ENCODE measurements at regions of chr4 and their contacts with region 1.

Region 1: DNA sequence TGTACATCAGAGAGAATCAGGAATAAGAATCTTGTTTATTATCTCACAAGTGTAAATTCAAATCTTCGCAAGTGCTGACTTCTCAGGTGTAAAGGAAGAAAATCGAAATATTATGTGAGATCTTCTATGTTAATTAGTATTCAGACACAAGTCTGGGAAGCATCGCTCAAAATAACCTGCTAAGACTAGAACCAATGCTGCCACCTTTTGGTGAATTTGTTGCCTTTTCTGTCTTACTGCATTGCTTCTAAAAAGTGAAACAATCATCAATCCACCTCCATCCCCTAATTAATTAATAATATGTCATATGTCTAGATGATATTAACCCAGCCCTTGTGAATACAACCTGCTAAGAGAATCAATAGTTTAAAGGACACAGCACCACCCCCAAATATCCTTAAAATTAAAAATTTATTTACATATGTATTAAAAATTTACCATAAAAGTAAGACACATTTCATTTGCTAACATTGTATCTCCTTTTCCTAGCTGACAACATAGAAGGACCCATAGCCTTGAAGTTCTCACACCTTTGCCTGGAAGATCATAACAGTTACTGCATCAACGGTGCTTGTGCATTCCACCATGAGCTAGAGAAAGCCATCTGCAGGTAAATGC is 3.5 kb downstream of the EPGN start:
- DNase-seq: peak; percentile 40
- H3K4me3 Mint-ChIP-seq: no peak overlapping the region
- H3K27ac Mint-ChIP-seq: no peak overlapping the region
- H3K4me1 Mint-ChIP-seq: no peaks in the 10 kb centered on the region
- H3K27me3 Mint-ChIP-seq: no peaks in the 10 kb centered on the region
- CTCF ChIP-seq: peak; percentile 35

Region 2: DNA sequence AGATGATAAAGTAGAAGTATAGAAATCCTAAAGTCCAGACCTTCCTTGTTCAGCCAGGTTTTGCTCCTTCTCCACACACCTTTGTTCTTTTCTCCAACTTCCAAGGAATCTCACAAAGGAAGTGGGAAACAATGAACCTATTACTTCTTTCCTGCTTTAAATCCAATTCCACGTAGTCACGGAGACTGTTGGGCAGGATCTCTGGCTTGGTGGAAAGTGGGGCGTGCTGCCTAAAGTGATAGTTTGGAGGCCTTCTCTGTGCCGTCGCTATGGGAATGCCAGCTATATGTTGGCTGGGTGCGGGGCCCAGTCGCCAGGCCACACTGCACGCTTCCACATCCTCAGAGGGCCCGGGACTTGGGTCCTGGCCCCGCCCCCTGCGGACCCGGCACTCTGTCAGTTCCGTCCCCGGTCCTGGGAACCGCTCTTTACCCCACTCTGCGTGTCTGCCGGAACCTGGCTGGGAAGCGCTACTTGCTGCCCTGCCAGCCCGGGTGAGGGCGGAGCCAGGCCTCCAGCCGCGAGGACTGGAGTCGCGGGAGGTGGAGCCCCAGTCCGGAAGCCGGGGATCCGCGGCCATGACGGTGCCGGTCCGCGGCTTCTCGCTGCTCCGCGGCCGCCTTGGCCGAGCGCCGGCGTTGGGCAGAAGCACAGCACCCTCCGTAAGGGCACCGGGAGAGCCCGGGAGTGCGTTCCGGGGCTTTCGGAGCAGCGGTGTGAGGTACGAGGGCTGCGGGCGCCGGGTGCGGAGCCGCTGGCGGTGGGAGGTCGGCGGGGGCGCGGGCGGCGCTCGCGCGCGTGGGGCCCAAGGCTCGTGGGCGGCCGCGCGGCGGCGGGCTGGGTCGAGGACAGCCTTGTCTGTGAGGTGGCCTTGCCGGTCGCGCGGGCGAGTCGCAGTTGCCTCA is 154.0 kb before region 1 on chr4 and contains the start of gene MTHFD2L:
- CTCF ChIA-PET with region 1: no interaction called
- intact Hi-C with region 1: no loop called
- DNase-seq: peak; percentile 94
- H3K4me3 Mint-ChIP-seq: peak within 1 kb of the TSS; percentile 79
- H3K27ac Mint-ChIP-seq: peak within 1 kb of the TSS; percentile 77
- H3K4me1 Mint-ChIP-seq: peaks cover 23% of the 10 kb centered on the region
- H3K27me3 Mint-ChIP-seq: no peaks in the 10 kb centered on the region
- CTCF ChIP-seq: no peak
- total RNA-seq, gene MTHFD2L: 21.8 and 24.1 TPM in 2 replicates

Region 3: DNA sequence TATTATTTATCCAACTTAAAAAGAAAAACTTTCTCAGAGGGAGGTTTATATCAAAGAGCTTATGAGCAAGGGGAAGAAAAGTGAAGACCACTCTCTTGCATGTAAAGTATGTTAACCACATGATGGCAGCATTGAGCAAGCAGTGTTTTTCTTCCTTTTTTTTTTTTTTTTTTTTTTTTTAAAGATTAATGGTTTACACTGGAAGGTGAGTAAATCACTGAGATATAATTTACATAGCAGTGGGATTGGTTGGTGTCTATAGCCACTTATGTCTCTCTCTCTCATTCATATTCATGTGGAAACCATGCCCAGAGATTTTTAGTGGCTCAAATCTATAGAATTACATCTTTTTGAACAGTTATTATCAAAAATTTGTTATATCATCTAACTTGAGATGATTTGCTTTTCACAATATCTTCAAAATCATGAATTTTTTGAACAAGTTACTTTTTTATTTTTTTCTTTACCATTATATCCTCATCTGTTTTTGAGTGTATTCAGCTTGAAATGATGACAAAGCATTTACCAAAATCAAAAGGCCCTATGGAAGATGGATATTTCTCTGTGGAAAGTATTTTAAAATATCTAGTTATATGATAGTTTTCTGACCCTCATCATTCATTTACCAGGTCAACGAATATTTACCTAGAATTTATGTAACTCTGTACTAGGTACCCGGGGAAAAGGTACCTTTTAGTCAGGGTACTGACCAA is 122.3 kb before region 1 on chr4:
- CTCF ChIA-PET with region 1: interaction called, 3 read pairs
- intact Hi-C with region 1: loop called (anchors 1 kb)
- DNase-seq: no peak
- H3K4me3 Mint-ChIP-seq: no peak overlapping the region
- H3K27ac Mint-ChIP-seq: no peak overlapping the region
- H3K4me1 Mint-ChIP-seq: no peaks in the 10 kb centered on the region
- H3K27me3 Mint-ChIP-seq: no peaks in the 10 kb centered on the region
- CTCF ChIP-seq: peak; percentile 48

Region 4: DNA sequence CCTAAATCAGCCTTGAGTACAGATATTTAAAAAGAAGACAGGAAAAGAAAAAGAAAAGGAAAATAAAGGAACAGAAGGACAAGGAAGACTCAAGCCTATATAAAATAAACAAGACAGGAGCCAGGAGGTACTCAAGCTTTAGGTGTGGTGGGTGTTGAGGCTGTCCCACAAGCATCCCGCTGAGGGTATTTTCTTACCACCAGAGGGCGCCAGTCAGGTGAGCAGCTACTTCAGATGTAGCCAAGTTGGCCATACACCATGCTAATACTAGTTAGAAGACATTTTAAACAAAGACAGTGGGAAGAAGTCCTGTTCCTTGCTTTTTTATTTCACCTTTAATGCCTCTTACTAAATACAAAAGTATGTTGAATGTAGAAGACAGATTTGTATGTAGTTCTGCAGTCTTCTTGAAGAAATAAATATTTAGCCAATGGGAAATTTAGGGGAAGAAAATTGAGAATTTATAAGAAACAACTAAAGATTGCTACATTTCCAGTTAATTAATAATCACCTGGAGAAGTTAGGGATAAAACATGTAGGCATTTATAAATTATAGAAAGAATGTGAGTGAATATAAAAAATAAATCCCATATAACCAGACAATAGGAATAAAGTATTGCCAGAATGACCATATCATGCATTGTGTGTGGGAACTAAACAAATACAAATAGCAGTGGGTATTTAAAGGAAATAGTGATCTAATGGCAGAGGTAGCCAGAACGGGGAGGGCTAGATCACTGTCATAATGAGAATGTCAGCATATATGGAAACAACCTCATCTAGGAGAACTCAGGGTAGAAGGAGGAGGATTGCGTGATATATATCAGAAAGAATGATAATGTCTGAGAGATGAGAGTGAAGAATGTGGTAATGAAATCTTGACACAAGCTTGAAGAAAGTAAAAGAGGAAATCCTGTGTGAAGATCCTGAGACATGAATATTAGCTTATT is 82.8 kb before region 1 on chr4:
- CTCF ChIA-PET with region 1: no interaction called
- intact Hi-C with region 1: loop called (anchors 1 kb)
- DNase-seq: peak; percentile 78
- H3K4me3 Mint-ChIP-seq: no peak overlapping the region
- H3K27ac Mint-ChIP-seq: no peak overlapping the region
- H3K4me1 Mint-ChIP-seq: peaks cover 27% of the 10 kb centered on the region
- H3K27me3 Mint-ChIP-seq: no peaks in the 10 kb centered on the region
- CTCF ChIP-seq: peak; percentile 79

Region 5: GRCh38 chr4:74659576-74660411 is 348.0 kb after region 1 on chr4:
- CTCF ChIA-PET with region 1: no interaction called
- intact Hi-C with region 1: no loop called
- DNase-seq: peak; percentile 69
- H3K4me3 Mint-ChIP-seq: peak overlapping the region; percentile 53
- H3K27ac Mint-ChIP-seq: peak overlapping the region; percentile 97
- H3K4me1 Mint-ChIP-seq: peaks cover 60% of the 10 kb centered on the region
- H3K27me3 Mint-ChIP-seq: no peaks in the 10 kb centered on the region
- CTCF ChIP-seq: no peak

Region 6: GRCh38 chr4:75207882-75208281 is 896.1 kb after region 1 on chr4:
- CTCF ChIA-PET with region 1: no interaction called
- intact Hi-C with region 1: no loop called
- DNase-seq: no peak
- H3K4me3 Mint-ChIP-seq: no peak overlapping the region
- H3K27ac Mint-ChIP-seq: no peak overlapping the region
- H3K4me1 Mint-ChIP-seq: no peaks in the 10 kb centered on the region
- H3K27me3 Mint-ChIP-seq: peaks cover 25% of the 10 kb centered on the region
- CTCF ChIP-seq: no peak